ENCODE measurements at regions of chr1 and their contacts with region 1.

Region 1: GRCh38 chr1:25895365-25895993 is 10.7 kb downstream of the STMN1 start:
- DNase-seq: peak; percentile 79 to 96
- H3K4me3 ChIP-seq: no peak overlapping the region
- H3K27ac ChIP-seq: no peak overlapping the region
- H3K4me1 ChIP-seq: peaks cover 0 to 16% (median 9%) of the 10 kb centered on the region in 4 experiments; a peak in 6 of 7 replicates
- H3K27me3 ChIP-seq: no peaks in the 10 kb centered on the region
- CTCF ChIP-seq: peak; percentile 95 to 100 (median 99)
- EP300 ChIP-seq: no peak
- POLR2A ChIP-seq: no peak
- RAD21 ChIP-seq: peak; percentile 94 to 98

Region 2: GRCh38 chr1:25819576-25820246 is 75.8 kb before region 1 on chr1 and contains the start of gene MTFR1L:
- CTCF ChIA-PET with region 1: interaction called, 11 read pairs
- POLR2A ChIA-PET with region 1: interaction called, 3 read pairs
- DNase-seq: peak in 1 of 2 experiments; percentile 91
- H3K4me3 ChIP-seq: peak within 1 kb of the TSS; percentile 75 to 85 (median 80)
- H3K27ac ChIP-seq: peak within 1 kb of the TSS; percentile 31; the same call in 1 of the 2 replicates
- H3K4me1 ChIP-seq: peaks cover 12 to 25% (median 15%) of the 10 kb centered on the region in 4 experiments
- H3K27me3 ChIP-seq: peaks cover 0 to 6% (median 2%) of the 10 kb centered on the region in 4 experiments; a peak in 4 of 7 replicates
- CTCF ChIP-seq: no peak
- EP300 ChIP-seq: no peak
- POLR2A ChIP-seq: peak; percentile 36 to 81
- RAD21 ChIP-seq: no peak
- total RNA-seq, gene MTFR1L: 20.8 and 23.1 TPM in 2 replicates

Region 3: DNA sequence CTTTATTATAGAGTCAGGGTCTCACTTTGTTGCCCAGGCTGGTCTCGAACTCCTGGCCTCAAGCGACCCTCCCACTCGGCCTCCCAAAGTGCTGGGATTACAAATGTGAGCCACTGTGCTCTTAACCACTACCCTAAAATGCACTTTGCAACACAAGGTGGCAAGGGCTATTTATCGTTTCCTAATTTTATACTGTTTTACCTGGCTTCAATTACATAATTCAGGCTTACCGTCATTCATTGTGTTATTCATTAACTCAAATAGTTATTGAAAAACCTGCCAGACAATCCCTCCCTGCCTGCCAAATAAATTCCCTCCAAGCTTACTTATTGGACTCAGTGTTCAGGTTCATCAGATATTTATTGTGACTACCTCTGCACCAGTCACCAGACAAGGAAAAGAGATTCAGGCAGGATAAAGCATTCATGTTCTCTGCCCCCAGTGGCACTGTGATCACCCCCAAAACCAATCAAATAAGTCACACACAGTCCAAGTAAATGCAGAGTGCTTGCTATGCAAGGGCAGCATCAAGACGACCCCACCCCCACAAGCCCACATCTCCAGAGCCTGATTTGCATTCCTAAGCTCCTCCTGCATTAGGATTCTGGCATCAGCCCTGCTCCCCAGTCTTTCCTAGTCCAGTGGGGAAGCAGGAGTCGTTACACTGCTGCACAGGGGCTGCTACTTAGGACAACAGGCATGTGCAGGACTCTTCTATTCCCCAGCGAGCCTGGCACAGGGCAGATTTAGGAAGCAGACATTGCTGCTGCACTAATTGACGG is 28.1 kb before region 1 on chr1:
- CTCF ChIA-PET with region 1: interaction called, 13 read pairs
- POLR2A ChIA-PET with region 1: interaction called, 4 read pairs
- DNase-seq: no peak
- H3K4me3 ChIP-seq: no peak overlapping the region; a peak in 1 of 8 replicates
- H3K27ac ChIP-seq: no peak overlapping the region
- H3K4me1 ChIP-seq: peaks cover 3 to 15% (median 11%) of the 10 kb centered on the region in 4 experiments
- H3K27me3 ChIP-seq: no peaks in the 10 kb centered on the region
- CTCF ChIP-seq: no peak
- EP300 ChIP-seq: no peak
- POLR2A ChIP-seq: no peak
- RAD21 ChIP-seq: no peak

Region 4: DNA sequence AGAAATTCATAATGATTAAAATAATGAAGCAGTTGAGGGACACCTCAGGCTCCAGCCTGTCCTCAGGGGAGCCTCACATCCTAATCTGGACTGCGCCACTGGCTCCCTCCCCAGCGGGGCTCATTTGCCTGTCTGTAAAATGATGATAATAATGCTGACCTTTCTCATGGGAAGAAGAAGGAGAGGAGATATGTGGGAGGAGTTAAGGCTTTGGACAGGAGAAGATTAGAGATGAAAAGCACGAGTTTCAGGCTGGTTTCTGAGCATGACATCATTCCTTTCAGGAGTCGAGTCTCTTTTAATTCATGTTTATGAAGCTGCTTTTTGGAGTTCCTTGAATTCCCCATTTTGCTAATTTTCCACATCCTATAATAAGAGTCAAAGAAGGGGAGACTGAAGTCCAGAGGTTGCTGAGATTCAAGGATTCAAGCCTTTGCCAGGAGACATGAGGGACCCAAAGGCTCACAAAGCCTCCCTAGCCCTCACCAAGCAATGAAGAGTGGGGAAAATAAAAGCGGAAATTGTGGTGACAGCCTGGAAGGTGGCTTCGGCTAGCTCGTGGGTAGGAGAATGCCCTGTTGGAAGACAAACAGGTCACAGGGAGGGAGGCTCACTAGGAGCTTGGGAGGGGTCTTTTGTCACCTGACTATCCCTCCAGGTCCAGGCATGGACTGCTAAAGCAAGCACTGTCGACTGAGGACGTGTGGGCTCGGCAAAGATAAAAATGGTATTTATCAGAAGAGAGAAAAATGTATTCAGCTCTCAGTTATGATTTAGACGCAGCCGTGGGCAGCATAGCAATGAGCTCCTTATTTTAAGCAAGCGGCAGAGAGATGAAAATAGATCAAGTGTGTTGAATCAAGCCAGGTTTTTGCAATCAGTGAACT is 38.2 kb after region 1 on chr1:
- CTCF ChIA-PET with region 1: interaction called, 13 read pairs
- POLR2A ChIA-PET with region 1: interaction called, 6 read pairs
- DNase-seq: no peak
- H3K4me3 ChIP-seq: no peak overlapping the region
- H3K27ac ChIP-seq: no peak overlapping the region
- H3K4me1 ChIP-seq: no peaks in the 10 kb centered on the region; a peak in 1 of 7 replicates
- H3K27me3 ChIP-seq: no peaks in the 10 kb centered on the region
- CTCF ChIP-seq: no peak
- EP300 ChIP-seq: no peak
- POLR2A ChIP-seq: no peak
- RAD21 ChIP-seq: no peak

Region 5: GRCh38 chr1:25971066-25971810 is 75.8 kb after region 1 on chr1:
- CTCF ChIA-PET with region 1: interaction called, 11 read pairs
- POLR2A ChIA-PET with region 1: interaction called, 4 read pairs
- DNase-seq: no peak
- H3K4me3 ChIP-seq: no peak overlapping the region
- H3K27ac ChIP-seq: no peak overlapping the region
- H3K4me1 ChIP-seq: peaks cover 2 to 6% (median 3%) of the 10 kb centered on the region in 4 experiments; a peak in 4 of 7 replicates
- H3K27me3 ChIP-seq: no peaks in the 10 kb centered on the region; a peak in 1 of 7 replicates
- CTCF ChIP-seq: no peak
- EP300 ChIP-seq: no peak
- POLR2A ChIP-seq: no peak
- RAD21 ChIP-seq: no peak

Region 6: DNA sequence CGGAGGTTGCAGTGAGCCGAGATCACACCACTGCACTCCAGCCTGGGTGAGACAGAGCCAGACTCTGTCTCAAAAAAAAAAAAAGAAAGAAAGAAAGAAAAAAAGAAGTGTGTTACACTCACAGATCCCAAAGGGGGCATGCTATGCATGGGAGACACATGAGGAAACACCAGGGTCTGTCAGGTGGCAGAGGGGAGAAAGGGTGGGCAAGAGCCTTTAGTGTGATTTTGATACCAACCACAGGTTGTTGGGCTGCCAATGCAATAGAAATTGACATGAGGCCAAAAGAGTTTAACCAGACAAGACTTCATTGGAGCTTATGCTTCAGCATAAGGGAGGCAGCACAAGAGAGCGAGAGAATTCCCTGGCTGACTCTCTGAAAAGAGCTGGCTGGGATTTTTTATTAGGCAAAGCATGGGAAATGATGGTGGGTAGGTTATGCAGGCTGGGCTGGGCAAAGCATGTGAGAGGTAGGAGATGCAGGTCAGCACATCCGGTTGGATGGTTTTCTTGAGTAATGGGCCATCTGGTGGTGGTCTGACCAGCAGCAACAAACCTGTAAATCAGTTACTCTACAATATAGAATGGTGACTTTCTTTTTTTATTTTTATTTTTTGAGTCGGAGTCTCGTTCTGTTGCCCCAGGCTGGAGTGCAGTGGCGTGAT is 114.4 kb after region 1 on chr1:
- CTCF ChIA-PET with region 1: interaction called, 330 read pairs
- POLR2A ChIA-PET with region 1: no interaction called
- DNase-seq: peak; percentile 25 to 62
- H3K4me3 ChIP-seq: no peak overlapping the region
- H3K27ac ChIP-seq: no peak overlapping the region
- H3K4me1 ChIP-seq: peaks cover 0 to 5% (median 3%) of the 10 kb centered on the region in 4 experiments; a peak in 6 of 7 replicates
- H3K27me3 ChIP-seq: no peaks in the 10 kb centered on the region
- CTCF ChIP-seq: peak; percentile 36 to 63 (median 58)
- EP300 ChIP-seq: no peak
- POLR2A ChIP-seq: no peak
- RAD21 ChIP-seq: peak; percentile 52 to 57

Region 7: DNA sequence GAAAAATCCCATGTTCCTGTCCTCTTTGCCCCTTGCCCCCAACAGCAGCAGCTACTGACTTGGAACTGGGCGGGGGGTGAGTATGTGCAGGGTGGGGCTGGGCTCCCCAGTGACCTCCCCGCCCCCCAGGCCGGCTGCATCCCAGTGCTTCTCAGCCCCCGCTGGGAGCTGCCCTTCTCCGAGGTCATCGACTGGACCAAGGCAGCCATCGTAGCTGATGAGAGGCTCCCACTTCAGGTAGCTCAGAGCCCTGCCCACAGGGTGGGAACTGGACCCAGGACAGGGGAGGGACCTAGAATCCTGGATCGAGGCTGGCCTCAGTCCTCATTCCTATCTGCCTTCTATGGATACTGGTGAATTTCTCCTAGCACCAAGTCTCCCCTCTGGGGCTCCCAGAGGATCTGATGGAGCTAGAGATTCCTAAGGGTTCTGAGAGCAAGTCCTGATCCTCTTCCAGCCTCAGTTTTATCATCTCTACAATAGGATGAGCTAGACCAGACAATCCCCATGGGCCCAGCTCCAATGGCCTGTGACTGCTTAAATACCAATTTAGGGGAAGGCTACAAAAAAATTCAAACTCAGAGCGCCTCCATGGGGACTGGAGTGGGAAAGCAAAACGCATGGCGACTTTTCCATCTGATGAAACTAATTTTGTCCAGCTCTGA is 134.1 kb after region 1 on chr1:
- CTCF ChIA-PET with region 1: interaction called, 39 read pairs
- POLR2A ChIA-PET with region 1: interaction called, 6 read pairs
- DNase-seq: no peak
- H3K4me3 ChIP-seq: no peak overlapping the region
- H3K27ac ChIP-seq: no peak overlapping the region
- H3K4me1 ChIP-seq: peaks cover 0 to 4% (median 2%) of the 10 kb centered on the region in 4 experiments; a peak in 3 of 7 replicates
- H3K27me3 ChIP-seq: peaks cover 3 to 15% (median 13%) of the 10 kb centered on the region in 4 experiments; a peak in 6 of 7 replicates
- CTCF ChIP-seq: peak; percentile 29 to 56 (median 55)
- EP300 ChIP-seq: no peak
- POLR2A ChIP-seq: no peak
- RAD21 ChIP-seq: peak; percentile 56 to 74

Measured in H1 (cell line).